ENCODE measurements at regions of chr20 and their contacts with region 1.

Region 1: GRCh38 chr20:46349035-46349741 is 40.9 kb upstream of the CDH22 start:
- DNase-seq: peak; percentile 73 to 81 (median 81)
- ATAC-seq: peak; percentile 81
- H3K4me3 ChIP-seq: no peak overlapping the region
- H3K27ac ChIP-seq: no peak overlapping the region
- H3K4me1 ChIP-seq: peaks cover 24 to 34% of the 10 kb centered on the region in 2 experiments
- H3K27me3 ChIP-seq: 0 out of 5 replicates have a peak, but pooled peaks cover 0 to under 1% of the 10 kb centered on the region in 2 experiments
- CTCF ChIP-seq: peak; percentile 78 to 87 (median 86)
- EP300 ChIP-seq: no peak
- POLR2A ChIP-seq: no peak
- RAD21 ChIP-seq: peak; percentile 48 to 69

Region 2: DNA sequence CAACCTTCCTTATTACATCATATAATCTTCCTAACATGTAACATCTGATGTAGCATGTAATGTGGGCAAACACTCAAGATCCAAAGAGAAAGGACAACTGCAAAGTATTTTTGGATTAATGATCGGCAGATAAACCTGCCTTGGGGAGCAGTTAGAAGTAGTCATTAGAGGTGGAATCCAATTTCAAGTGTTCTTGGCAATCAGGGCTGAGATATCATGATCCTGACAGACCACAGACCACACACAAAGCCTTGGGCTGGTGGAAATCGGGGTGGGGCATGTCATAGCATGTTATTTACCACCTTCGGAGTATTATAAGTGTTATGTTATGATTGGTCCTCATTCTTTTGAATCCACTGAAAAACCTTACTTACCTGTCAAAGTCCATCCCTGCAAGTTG is 275.7 kb before region 1 on chr20:
- CTCF ChIA-PET with region 1: no interaction called
- POLR2A ChIA-PET with region 1: no interaction called
- in situ Hi-C with region 1: no loop called
- intact Hi-C with region 1: no loop called
- DNase-seq: no peak
- ATAC-seq: no peak
- H3K4me3 ChIP-seq: no peak overlapping the region
- H3K27ac ChIP-seq: no peak overlapping the region
- H3K4me1 ChIP-seq: no peaks in the 10 kb centered on the region
- H3K27me3 ChIP-seq: no peaks in the 10 kb centered on the region
- CTCF ChIP-seq: no peak
- EP300 ChIP-seq: no peak
- POLR2A ChIP-seq: no peak
- RAD21 ChIP-seq: no peak

Region 3: GRCh38 chr20:46307139-46307998 is 41.8 kb before region 1 on chr20:
- CTCF ChIA-PET with region 1: interaction called, 12 read pairs
- POLR2A ChIA-PET with region 1: interaction called, 3 read pairs
- in situ Hi-C with region 1: no loop called
- intact Hi-C with region 1: loop called (anchors 1 kb)
- DNase-seq: peak; percentile 69 to 91 (median 88)
- ATAC-seq: peak; percentile 93
- H3K4me3 ChIP-seq: peak overlapping the region; percentile 31; the same call in 1 of the 2 replicates
- H3K27ac ChIP-seq: no peak overlapping the region
- H3K4me1 ChIP-seq: peaks cover 0 to 28% of the 10 kb centered on the region in 2 experiments; a peak in 2 of 5 replicates
- H3K27me3 ChIP-seq: peaks cover 11 to 78% of the 10 kb centered on the region in 2 experiments; a peak in 4 of 5 replicates
- CTCF ChIP-seq: peak; percentile 88 to 92 (median 89)
- EP300 ChIP-seq: no peak
- POLR2A ChIP-seq: no peak
- RAD21 ChIP-seq: peak; percentile 70 to 87

Region 4: GRCh38 chr20:46674253-46675083 is 325.3 kb after region 1 on chr20:
- CTCF ChIA-PET with region 1: no interaction called
- POLR2A ChIA-PET with region 1: no interaction called
- in situ Hi-C with region 1: loop called (anchors 10 kb)
- intact Hi-C with region 1: no loop called
- DNase-seq: no peak
- ATAC-seq: no peak; the same call in 2 of the 3 replicates
- H3K4me3 ChIP-seq: no peak overlapping the region
- H3K27ac ChIP-seq: no peak overlapping the region
- H3K4me1 ChIP-seq: no peaks in the 10 kb centered on the region
- H3K27me3 ChIP-seq: no peaks in the 10 kb centered on the region
- CTCF ChIP-seq: no peak
- EP300 ChIP-seq: no peak
- POLR2A ChIP-seq: no peak
- RAD21 ChIP-seq: no peak

Measured in K562 (cell line).